Caco-2 (cell line): ENCODE measurements at regions of chr14 and their contacts with region 1.

Region 1: DNA sequence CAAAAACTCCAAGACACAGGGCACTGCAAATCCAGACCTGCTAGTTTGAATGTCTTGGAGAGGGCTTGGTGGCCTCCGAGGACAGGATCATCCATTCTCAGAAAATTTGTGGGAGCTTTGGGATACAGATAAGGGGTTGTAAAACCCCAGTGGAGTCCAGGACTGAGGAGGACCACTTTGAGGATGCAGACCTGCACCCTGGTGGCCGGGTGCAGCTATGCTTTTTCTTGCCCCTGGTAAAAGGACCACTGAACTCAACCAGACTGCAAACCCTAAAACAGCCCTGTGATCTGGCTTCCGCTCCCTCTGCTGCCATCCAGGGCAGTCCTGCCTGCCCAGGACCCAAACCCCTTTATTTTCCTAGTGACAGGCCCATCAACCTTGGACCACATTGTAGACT is 169.5 kb upstream of the DAAM1 start:
- DNase-seq: peak in 1 of 2 experiments; percentile 11
- H3K4me3 ChIP-seq: no peak overlapping the region
- H3K4me3 Mint-ChIP-seq: no peak overlapping the region
- H3K27ac Mint-ChIP-seq: no peak overlapping the region
- H3K4me1 ChIP-seq: no peaks in the 10 kb centered on the region
- H3K4me1 Mint-ChIP-seq: no peaks in the 10 kb centered on the region
- H3K27me3 ChIP-seq: no peaks in the 10 kb centered on the region
- H3K27me3 Mint-ChIP-seq: peaks cover 2% of the 10 kb centered on the region
- CTCF ChIP-seq: peak; percentile 23 to 48

Region 2: DNA sequence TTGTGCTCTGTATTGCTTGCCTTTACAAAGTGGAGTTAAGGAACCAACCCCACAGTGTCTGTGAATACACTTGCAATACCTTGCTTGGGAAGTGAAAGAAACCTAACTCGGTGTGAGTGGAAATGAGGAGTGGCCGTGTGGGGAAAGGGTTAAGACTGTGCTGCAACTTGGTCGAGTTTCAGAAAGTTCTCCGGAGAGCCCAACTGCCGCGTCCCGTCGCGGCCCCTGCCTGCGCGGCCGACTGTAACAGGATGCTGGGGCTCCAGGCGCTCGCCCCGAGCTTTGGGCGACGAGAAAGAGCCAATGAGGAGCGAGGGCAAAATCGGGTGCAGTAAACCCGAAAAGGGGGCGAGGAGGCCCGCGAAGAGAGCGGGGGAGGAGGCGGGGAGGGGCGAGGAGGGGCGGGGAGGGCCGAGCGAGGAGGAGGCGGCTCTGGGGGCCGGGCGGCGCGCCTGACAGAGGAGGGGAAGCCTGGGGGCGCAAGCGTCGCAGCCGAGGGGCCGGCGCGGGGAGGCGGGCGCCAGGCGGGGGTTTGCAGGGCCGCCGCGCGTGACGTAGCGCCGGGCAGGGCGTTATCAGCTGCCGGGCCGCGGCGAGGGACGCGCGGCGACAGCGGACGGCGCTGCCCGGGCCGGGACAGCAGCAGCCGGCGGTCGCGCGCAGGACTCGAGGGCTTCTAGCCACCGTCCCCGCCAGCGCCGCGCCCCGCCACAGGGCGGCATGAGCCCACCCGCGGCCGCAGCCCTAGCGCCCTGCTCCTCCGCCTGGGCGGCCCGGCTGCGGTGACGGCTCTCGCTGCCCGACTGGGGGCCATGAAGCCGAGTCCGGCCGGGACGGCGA is 381.4 kb before region 1 on chr14 and contains the start of gene DACT1:
- CTCF ChIA-PET with region 1: interaction called, 3 read pairs
- POLR2A ChIA-PET with region 1: no interaction called
- intact Hi-C with region 1: loop called (anchors 2 kb)
- DNase-seq: peak; percentile 44 to 55
- H3K4me3 ChIP-seq: peak within 1 kb of the TSS; percentile 40
- H3K4me3 Mint-ChIP-seq: peak within 1 kb of the TSS; percentile 84
- H3K27ac Mint-ChIP-seq: no peak within 1 kb of the TSS
- H3K4me1 ChIP-seq: peaks cover 8% of the 10 kb centered on the region; the same call in 1 of the 2 replicates
- H3K4me1 Mint-ChIP-seq: no peaks in the 10 kb centered on the region
- H3K27me3 ChIP-seq: no peaks in the 10 kb centered on the region; the same call in 1 of the 2 replicates
- H3K27me3 Mint-ChIP-seq: peaks cover 29% of the 10 kb centered on the region
- CTCF ChIP-seq: no peak
- total RNA-seq, gene DACT1: 0.23 and 0.74 TPM in 2 replicates

Region 3: DNA sequence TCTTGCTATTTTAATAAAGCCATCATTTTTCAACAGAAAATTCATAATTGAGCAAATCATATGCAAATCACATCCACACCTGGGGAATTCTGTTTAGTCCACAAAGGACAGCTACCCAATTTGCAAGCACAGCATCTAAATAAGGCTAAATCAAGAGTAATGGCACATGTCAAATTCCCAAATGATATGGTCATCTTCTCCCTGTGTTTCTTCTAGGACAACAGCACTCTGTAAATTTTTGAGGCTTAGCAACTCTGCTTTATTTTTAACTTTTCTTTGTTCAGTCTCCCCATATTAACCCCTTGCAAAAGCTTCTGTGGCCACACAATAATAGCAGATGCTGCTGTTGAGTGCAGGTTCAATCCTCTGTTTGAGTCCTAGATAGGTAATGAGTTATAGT is 13.8 kb after region 1 on chr14:
- CTCF ChIA-PET with region 1: no interaction called
- POLR2A ChIA-PET with region 1: no interaction called
- intact Hi-C with region 1: no loop called
- DNase-seq: no peak
- H3K4me3 ChIP-seq: no peak overlapping the region
- H3K4me3 Mint-ChIP-seq: no peak overlapping the region
- H3K27ac Mint-ChIP-seq: no peak overlapping the region
- H3K4me1 ChIP-seq: no peaks in the 10 kb centered on the region
- H3K4me1 Mint-ChIP-seq: peaks cover 9% of the 10 kb centered on the region
- H3K27me3 ChIP-seq: no peaks in the 10 kb centered on the region
- H3K27me3 Mint-ChIP-seq: peaks cover 8% of the 10 kb centered on the region
- CTCF ChIP-seq: no peak